ENCODE measurements at regions of chr15 and their contacts with region 1.

Region 1: DNA sequence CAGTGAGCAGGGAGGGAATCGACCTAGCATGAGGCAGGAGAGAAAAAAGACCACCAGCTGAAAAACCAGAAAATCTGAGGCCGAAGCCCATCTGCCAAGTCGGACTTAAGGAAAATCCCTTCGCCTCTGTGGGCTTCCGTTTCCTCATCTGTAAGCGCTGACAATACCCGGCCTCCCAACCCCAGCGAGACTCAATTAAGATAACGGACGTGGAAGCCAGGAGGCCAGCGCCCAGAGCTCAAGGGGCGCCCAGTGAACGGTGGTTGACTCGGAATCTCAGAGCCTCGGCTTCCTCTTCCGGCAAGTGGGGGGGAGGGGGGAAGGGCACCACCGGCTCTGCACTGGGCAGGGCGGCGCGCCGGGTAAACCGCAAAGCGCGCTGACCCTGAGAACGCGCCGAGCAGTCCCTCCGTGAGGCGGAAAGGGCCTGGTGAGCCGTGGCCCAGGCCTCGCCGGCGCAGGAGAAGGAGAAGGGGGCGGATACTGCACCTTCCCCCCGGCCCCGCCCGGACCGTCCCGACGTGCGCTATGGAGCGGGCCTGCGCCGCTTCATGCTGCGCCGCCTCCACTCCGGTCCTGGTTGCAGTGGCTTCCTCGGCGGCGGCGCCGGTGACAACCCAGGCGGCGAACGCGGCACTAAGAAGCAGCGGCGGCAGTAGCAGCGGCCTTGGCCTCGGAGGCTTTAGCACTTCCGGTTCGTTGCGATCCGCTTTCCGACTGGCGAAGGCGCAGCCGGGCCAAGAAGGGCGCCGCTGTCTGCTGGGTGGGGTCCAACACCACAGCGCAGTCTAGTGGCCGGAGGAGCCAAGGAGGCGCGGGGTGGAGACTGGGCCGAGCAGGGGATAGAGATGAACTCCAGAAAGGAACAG is at the start of gene DPP8:
- DNase-seq: peak; percentile 97
- H3K4me3 Mint-ChIP-seq: peak within 1 kb of the TSS; percentile 99
- H3K27ac Mint-ChIP-seq: peak within 1 kb of the TSS; percentile 97
- H3K4me1 Mint-ChIP-seq: peaks cover 42% of the 10 kb centered on the region
- H3K27me3 Mint-ChIP-seq: no peaks in the 10 kb centered on the region
- total RNA-seq, gene DPP8: 24.9 to 27.1 TPM

Region 2: DNA sequence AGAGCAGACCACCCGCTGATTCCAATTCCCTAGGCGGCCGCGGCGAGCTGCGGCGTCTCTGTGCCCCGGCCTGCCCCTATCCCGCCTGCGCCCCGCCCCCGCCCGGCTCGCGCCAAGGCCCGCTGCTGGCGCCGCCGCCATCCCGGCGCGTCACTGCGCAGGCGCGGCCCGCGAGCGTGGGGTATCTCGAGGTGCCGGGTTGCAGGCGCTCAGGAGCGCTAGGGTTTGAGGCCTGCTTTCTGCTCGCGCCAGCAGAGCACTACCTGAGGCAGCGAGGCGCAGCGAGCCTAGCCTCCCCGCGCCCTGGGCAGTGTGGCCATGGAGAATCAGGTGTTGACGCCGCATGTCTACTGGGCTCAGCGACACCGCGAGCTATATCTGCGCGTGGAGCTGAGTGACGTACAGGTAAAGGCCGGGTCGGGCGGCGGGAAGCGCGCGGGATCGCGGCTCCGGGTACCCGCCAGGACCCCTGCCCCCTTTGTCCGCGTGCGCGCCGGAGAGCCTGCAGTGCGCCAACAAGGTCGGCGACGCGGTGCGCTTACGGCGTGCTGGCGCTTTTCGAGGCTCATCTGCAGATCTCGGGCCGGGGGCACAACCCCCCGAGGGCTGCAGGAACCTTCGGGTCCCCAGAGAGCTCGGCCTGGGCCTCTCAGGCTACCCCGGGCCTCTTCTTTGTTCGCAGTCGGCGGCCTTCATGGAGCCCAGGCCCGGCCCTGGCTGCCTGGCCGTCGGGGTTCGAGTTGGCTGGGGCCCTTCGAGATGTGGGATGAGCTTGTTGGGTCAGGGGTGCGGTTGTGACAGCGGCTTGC is 13.3 kb after region 1 on chr15 and contains the start of gene HACD3:
- CTCF ChIA-PET with region 1: interaction called, 15 read pairs
- POLR2A ChIA-PET with region 1: interaction called, 16 read pairs
- intact Hi-C with region 1: loop called (anchors 1 kb)
- DNase-seq: peak; percentile 91
- H3K4me3 Mint-ChIP-seq: peak within 1 kb of the TSS; percentile 83
- H3K27ac Mint-ChIP-seq: peak within 1 kb of the TSS; percentile 77
- H3K4me1 Mint-ChIP-seq: peaks cover 29% of the 10 kb centered on the region
- H3K27me3 Mint-ChIP-seq: no peaks in the 10 kb centered on the region
- total RNA-seq, gene HACD3: 26.1 to 29.1 TPM

Measured in activated CD4-positive, alpha-beta memory T cell treated with anti-CD3 and anti-CD28 coated beads for 36 hours (primary cell).